Tibial artery (tissue), 4 donors: ENCODE measurements at regions of chrX and their contacts with region 1.

Region 1: GRCh38 chrX:154051201-154051810 is 31.6 kb upstream of the IRAK1 start:
- DNase-seq: peak; percentile 77 to 79
- H3K4me3 ChIP-seq: no peak overlapping the region
- H3K27ac ChIP-seq: peak overlapping the region in 1 of 2 donors; percentile 36
- H3K4me1 ChIP-seq: peaks cover 0 to 69% (median 39%) of the 10 kb centered on the region in 4 donors
- H3K27me3 ChIP-seq: no peaks in the 10 kb centered on the region
- CTCF ChIP-seq: peak; percentile 52 to 59

Region 2: DNA sequence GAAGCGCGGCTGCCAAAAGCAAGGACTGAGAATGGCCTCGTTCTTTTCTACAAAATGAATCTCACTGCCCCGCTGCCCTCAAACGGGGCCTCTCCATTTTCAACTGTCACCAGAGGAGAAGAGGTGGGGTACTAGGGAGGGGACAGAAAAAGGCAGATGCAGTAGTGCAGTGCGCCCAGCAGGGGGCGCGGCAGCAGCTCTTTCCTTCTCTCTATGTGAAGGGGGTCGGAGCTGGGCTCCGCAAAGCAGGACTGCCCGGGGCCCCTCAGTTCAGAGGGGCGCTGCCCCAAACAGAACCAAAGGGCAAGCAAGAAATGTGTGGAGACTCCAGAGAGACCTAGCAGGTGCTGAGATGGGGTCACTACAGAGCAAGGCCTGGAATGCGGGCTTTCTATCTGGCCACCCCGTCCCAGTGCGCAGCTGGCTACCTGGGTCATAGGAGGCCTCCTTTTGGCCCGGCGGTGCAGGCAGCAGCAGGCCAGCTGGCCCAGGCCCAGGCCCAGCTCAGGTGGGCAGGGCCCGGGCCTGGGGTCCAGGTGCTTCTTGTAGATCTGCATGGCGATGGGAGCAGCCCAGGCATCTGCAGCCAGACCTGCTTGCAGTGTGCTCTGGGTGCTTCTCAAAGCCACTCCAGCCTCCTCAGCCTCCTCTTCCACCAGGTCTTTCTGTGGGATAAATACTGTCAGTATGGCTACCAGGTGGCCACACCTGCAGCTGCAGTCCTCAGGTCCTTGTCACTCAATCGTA is 37.5 kb before region 1 on chrX:
- intact Hi-C with region 1: loop called (anchors 5 kb)
- DNase-seq: no peak
- H3K4me3 ChIP-seq: no peak overlapping the region
- H3K27ac ChIP-seq: no peak overlapping the region
- H3K4me1 ChIP-seq: peaks cover 0 to 17% (median 5%) of the 10 kb centered on the region in 4 donors
- H3K27me3 ChIP-seq: no peaks in the 10 kb centered on the region
- CTCF ChIP-seq: peak; percentile 77 to 85